ENCODE measurements at regions of chr10 and their contacts with region 1.

Region 1: GRCh38 chr10:78972947-78973900 is 95.5 kb upstream of the ZMIZ1 start:
- DNase-seq: peak; percentile 86
- ATAC-seq: peak; percentile 83
- H3K4me3 Mint-ChIP-seq: peak overlapping the region; percentile 50
- H3K27ac Mint-ChIP-seq: peak overlapping the region; percentile 68
- H3K4me1 Mint-ChIP-seq: peaks cover 19% of the 10 kb centered on the region
- H3K27me3 Mint-ChIP-seq: no peaks in the 10 kb centered on the region

Region 2: GRCh38 chr10:78991187-78991586 is 18.0 kb after region 1 on chr10:
- CTCF ChIA-PET with region 1: interaction called, 16 read pairs
- DNase-seq: no peak
- ATAC-seq: peak; percentile 62
- H3K4me3 Mint-ChIP-seq: no peak overlapping the region
- H3K27ac Mint-ChIP-seq: no peak overlapping the region
- H3K4me1 Mint-ChIP-seq: peaks cover 21% of the 10 kb centered on the region
- H3K27me3 Mint-ChIP-seq: no peaks in the 10 kb centered on the region

Region 3: DNA sequence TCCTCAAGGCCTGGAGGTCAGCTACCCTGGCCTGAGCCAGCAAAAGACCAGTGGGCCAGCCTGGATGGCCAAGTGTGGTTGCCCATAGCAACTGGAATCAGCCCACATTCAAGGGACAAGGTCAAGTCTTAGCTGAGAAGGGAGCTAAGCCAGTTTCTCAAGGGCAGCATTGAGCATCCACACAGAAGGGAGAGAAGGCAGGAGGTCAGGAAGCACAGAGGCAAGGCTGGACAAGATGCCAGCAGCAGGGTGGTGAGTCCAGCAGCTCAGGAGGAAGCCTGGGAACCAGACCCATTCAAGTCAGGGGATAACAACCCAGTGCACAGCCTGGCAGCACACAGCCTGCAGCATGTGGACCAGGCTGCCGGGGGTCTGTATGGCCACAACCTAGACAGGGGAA is 41.6 kb after region 1 on chr10:
- CTCF ChIA-PET with region 1: no interaction called
- DNase-seq: no peak
- ATAC-seq: no peak
- H3K4me3 Mint-ChIP-seq: no peak overlapping the region
- H3K27ac Mint-ChIP-seq: no peak overlapping the region
- H3K4me1 Mint-ChIP-seq: no peaks in the 10 kb centered on the region
- H3K27me3 Mint-ChIP-seq: peaks cover 10% of the 10 kb centered on the region

Region 4: GRCh38 chr10:79047875-79048638 is 74.8 kb after region 1 on chr10:
- CTCF ChIA-PET with region 1: interaction called, 10 read pairs
- DNase-seq: peak; percentile 83
- ATAC-seq: peak; percentile 95
- H3K4me3 Mint-ChIP-seq: peak overlapping the region; percentile 52
- H3K27ac Mint-ChIP-seq: peak overlapping the region; percentile 94
- H3K4me1 Mint-ChIP-seq: peaks cover 28% of the 10 kb centered on the region
- H3K27me3 Mint-ChIP-seq: no peaks in the 10 kb centered on the region